Vagina (tissue), 2 donors: ENCODE measurements at regions of chr10 and their contacts with region 1.

Region 1: GRCh38 chr10:110547139-110547761 is 20.2 kb upstream of the SMC3 start:
- DNase-seq: peak in 1 of 2 donors; percentile 1
- H3K4me3 ChIP-seq: no peak overlapping the region
- H3K27ac ChIP-seq: no peak overlapping the region
- H3K4me1 ChIP-seq: no peaks in the 10 kb centered on the region
- H3K27me3 ChIP-seq: no peaks in the 10 kb centered on the region
- CTCF ChIP-seq: peak; percentile 54 to 84 (median 68)
- POLR2A ChIP-seq: no peak

Region 2: DNA sequence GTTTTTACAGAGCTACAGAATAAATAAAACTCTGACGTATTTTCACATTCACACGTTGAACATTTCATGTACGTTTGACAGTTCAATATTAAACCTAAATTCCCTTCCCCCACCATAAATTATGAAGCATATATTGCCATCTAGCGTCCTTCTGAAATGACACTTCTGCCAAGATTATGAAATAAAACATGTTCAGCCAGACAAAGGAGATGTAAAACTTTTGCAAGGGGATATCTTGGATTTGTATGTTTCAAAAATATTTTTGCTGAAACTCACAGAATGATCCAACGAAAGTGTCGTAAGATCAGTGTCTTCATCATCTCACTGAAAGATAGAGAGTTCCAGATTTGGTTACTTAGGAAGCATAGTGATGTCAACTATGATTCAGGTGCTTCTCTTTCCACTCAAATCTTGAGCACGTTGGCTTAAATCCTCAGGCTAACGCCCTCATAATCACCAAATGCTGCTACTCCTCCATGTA is 1528.3 kb before region 1 on chr10:
- intact Hi-C with region 1: no loop called
- DNase-seq: no peak
- H3K4me3 ChIP-seq: no peak overlapping the region
- H3K27ac ChIP-seq: no peak overlapping the region
- H3K4me1 ChIP-seq: no peaks in the 10 kb centered on the region
- H3K27me3 ChIP-seq: no peaks in the 10 kb centered on the region
- CTCF ChIP-seq: no peak
- POLR2A ChIP-seq: no peak

Region 3: GRCh38 chr10:110508806-110509544 is 38.3 kb before region 1 on chr10:
- intact Hi-C with region 1: loop called (anchors 5 kb)
- DNase-seq: no peak
- H3K4me3 ChIP-seq: no peak overlapping the region
- H3K27ac ChIP-seq: no peak overlapping the region
- H3K4me1 ChIP-seq: peaks cover 11% of the 10 kb centered on the region
- H3K27me3 ChIP-seq: no peaks in the 10 kb centered on the region
- CTCF ChIP-seq: no peak
- POLR2A ChIP-seq: no peak

Region 4: GRCh38 chr10:110528224-110528997 is 18.8 kb before region 1 on chr10:
- intact Hi-C with region 1: no loop called
- DNase-seq: no peak
- H3K4me3 ChIP-seq: no peak overlapping the region
- H3K27ac ChIP-seq: no peak overlapping the region
- H3K4me1 ChIP-seq: peaks cover 8% of the 10 kb centered on the region
- H3K27me3 ChIP-seq: no peaks in the 10 kb centered on the region
- CTCF ChIP-seq: no peak
- POLR2A ChIP-seq: no peak

Region 5: GRCh38 chr10:110724116-110724921 is 177.1 kb after region 1 on chr10:
- intact Hi-C with region 1: no loop called
- DNase-seq: no peak
- H3K4me3 ChIP-seq: no peak overlapping the region
- H3K27ac ChIP-seq: no peak overlapping the region
- H3K4me1 ChIP-seq: no peaks in the 10 kb centered on the region
- H3K27me3 ChIP-seq: no peaks in the 10 kb centered on the region
- CTCF ChIP-seq: no peak
- POLR2A ChIP-seq: no peak